ENCODE measurements at regions of chr10 and their contacts with region 1.

Region 1: DNA sequence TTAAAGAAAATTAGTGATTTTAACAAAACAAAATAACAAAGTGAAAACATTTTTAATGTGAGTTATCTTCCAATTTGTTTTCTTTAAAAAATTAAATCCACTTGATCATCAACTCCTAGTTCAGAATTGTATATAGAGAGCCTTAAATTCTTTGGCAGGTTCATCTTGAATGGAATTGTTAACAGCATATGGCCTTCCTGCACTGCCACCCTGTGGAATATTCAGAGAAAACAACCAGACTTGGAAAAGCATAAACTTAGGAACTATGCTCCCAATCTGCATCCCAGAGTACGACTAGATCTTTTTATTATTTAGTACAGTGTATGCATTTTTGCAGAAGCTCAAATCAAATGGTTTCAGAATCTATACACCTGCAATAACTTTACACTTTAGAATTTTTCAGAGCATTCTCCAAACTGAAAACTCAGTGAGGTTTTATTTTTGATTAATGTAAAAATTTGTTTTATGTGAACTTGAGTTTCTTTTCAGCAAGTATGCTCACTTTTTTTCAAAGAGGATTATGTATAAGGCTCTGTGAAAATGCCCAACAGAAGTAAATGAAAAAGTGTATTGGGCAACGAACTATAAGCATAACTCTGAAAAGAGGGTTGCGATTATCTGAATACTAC is 44.9 kb upstream of the ANK3 start:
- DNase-seq: no peak
- ATAC-seq: peak; percentile 73 to 88 (median 78)
- H3K4me3 ChIP-seq: no peak overlapping the region
- H3K27ac ChIP-seq: no peak overlapping the region
- H3K4me1 ChIP-seq: peaks cover 14% of the 10 kb centered on the region
- H3K27me3 ChIP-seq: no peaks in the 10 kb centered on the region
- CTCF ChIP-seq: peak; percentile 73

Region 2: GRCh38 chr10:60099998-60100747 is 334.4 kb before region 1 on chr10:
- intact Hi-C with region 1: loop called (anchors 5 to 10 kb)
- DNase-seq: no peak
- ATAC-seq: peak; percentile 63 to 90 (median 76)
- H3K4me3 ChIP-seq: no peak overlapping the region
- H3K27ac ChIP-seq: peak overlapping the region; percentile 33
- H3K4me1 ChIP-seq: no peaks in the 10 kb centered on the region
- H3K27me3 ChIP-seq: no peaks in the 10 kb centered on the region
- CTCF ChIP-seq: peak; percentile 70

Region 3: DNA sequence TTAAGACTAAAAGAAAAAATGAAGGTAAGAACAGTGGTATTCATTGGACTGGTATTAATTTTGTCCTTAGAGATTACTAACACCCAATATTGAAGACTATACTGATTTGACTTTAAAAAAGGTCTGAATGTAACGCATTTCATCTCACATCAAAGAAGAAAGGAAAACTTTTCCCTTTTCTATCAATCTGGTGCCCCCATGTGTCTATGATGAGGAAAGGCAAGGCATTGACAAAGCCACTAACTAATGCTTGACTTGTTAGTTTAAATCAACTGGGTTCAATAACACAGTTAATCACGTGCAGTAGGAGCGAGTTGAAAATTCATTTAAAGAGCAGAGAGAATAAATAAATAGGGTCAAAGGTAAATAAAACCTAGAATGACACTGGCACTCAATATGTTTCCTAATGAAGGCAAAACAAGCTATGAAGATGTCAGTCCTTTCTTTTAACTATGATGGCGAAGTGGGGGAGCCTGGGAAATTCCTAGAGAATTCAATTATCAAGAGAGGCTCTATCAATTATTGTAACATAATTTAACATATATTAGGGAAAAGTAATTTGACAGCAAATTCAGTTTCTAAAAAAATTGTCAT is 225.8 kb before region 1 on chr10:
- intact Hi-C with region 1: loop called (anchors 5 to 10 kb)
- DNase-seq: no peak
- ATAC-seq: peak; percentile 57 to 88 (median 71)
- H3K4me3 ChIP-seq: no peak overlapping the region
- H3K27ac ChIP-seq: no peak overlapping the region
- H3K4me1 ChIP-seq: no peaks in the 10 kb centered on the region
- H3K27me3 ChIP-seq: no peaks in the 10 kb centered on the region
- CTCF ChIP-seq: peak; percentile 78

Region 4: DNA sequence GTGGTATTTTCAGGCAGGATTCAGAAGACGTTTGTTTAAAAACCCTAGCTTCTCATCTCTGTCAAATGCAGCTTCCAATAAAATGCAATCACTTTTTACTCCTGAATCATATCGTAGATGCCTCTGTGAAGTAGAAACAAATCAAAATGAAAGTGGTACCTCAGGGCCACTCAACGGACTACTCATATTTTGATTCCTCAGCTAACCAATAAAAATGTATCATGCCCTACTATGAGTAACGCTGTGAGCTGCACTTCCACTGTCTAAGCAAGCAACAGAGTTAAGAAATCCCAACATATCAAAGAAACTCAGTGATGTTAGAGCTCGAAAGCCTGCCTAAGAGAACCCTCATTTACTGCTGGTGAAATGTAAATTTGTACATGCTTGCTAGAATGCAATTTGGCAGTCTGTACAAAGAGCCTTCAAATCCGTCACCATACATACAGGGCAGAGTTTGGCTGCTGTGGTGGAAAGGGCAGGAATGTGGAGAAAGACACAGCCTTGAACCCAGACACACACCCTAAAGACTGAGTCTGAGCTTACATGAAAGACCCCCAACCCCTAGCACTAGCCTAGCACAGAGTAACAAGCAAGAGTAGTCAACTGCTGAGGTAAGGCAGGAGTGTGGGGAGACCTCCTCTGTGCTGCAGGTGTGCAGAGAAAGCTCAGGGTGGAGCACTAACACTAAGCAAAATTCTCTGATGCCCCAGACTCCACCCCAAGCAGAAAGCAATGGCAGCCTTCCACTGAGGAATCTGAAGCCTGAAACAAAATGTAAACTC is 196.4 kb before region 1 on chr10:
- intact Hi-C with region 1: loop called in 1 of 2 experiments (anchors 2 kb)
- DNase-seq: no peak
- ATAC-seq: peak; percentile 56 to 71 (median 67)
- H3K4me3 ChIP-seq: no peak overlapping the region
- H3K27ac ChIP-seq: no peak overlapping the region
- H3K4me1 ChIP-seq: no peaks in the 10 kb centered on the region
- H3K27me3 ChIP-seq: no peaks in the 10 kb centered on the region
- CTCF ChIP-seq: peak; percentile 25

Region 5: GRCh38 chr10:60388709-60389301 is 45.7 kb before region 1 on chr10:
- intact Hi-C with region 1: no loop called
- DNase-seq: no peak
- ATAC-seq: no peak
- H3K4me3 ChIP-seq: no peak overlapping the region
- H3K27ac ChIP-seq: no peak overlapping the region
- H3K4me1 ChIP-seq: peaks cover 14% of the 10 kb centered on the region
- H3K27me3 ChIP-seq: no peaks in the 10 kb centered on the region
- CTCF ChIP-seq: no peak

Region 6: GRCh38 chr10:60480865-60481563 is 46.5 kb after region 1 on chr10:
- intact Hi-C with region 1: no loop called
- DNase-seq: no peak
- ATAC-seq: peak; percentile 79 to 96 (median 87)
- H3K4me3 ChIP-seq: peak overlapping the region; percentile 28
- H3K27ac ChIP-seq: peak overlapping the region; percentile 69
- H3K4me1 ChIP-seq: peaks cover 25% of the 10 kb centered on the region
- H3K27me3 ChIP-seq: no peaks in the 10 kb centered on the region
- CTCF ChIP-seq: no peak

Measured in psoas muscle (tissue), 8 donors.